Gastrocnemius medialis (tissue), 4 donors: ENCODE measurements at regions of chr14 and their contacts with region 1.

Region 1: DNA sequence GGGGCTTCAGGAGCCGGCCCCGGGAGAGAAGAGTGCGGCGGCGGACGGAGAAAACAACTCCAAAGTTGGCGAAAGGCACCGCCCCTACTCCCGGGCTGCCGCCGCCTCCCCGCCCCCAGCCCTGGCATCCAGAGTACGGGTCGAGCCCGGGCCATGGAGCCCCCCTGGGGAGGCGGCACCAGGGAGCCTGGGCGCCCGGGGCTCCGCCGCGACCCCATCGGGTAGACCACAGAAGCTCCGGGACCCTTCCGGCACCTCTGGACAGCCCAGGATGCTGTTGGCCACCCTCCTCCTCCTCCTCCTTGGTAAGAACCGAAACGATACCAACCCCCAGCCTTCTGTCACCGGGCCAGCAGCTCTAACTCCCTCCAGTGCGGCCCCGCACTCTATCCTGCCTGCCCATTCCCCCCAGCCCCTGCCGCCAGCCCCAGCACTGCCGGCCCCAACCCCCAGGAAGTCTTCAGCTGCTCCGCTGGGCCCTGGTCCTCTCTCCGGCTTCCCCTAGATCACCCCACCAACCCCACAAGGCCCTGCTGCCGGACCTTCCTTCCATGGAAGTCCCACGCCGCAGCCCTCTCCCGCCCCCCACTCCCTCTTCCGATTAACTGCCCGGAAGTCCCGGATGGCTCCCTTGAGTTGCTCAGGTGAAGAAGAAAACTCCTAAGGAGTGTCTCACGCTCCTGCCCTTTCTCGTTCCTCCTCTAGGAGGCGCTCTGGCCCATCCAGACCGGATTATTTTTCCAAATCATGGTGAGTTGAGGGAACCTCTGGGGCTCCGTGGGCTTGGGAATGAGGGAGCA is 693 bp downstream of the LRP10 start:
- DNase-seq: peak; percentile 62 to 79
- ATAC-seq: peak; percentile 72 to 74
- H3K4me3 ChIP-seq: peak overlapping the region; percentile 89 to 100 (median 96)
- H3K27ac ChIP-seq: peak overlapping the region; percentile 98 to 100 (median 99)
- H3K4me1 ChIP-seq: peaks cover 16 to 22% of the 10 kb centered on the region in 2 donors
- H3K27me3 ChIP-seq: no peaks in the 10 kb centered on the region
- CTCF ChIP-seq: peak; percentile 83 to 95 (median 91)
- POLR2A ChIP-seq: peak in 1 of 2 donors; percentile 34

Region 2: DNA sequence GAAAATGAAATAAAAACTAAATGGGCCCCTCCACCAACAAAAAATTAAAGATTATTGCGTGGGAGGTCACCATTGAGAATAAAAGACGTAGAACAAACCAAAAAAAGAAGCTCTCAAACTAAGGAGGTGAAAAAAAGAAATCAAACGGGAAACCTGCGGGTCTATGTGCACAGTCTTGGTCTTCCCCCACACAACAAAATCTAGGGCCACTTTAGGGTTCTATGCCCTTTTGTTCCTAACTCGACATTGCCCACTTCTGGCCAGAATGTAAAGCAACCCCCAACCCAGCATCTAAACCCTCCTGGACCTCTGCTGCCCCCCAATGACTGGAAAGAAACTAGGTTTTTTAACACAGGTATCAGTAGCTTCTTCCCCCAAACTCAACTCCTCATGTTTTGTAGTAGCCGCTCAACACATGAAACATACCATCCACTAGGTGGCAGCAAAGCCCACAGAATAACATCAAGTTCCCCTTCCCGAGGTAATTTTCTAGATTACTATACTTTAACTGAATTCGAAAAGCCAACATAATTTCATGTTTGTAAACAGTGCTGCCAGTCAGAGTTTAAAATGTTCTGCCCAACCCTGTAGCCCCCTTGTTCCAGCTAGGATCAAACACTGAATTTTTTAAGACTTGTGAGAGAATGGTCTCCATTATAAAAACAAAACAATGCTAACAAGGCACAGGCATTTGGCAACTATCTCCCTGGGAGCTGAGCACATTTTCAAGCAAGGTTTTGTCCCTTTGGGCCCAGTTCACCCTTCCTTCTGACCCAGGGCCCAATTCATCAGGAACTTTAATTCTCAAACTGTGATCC is 301.9 kb before region 1 on chr14:
- in situ Hi-C with region 1: loop called in 1 of 4 experiments (anchors 25 kb)
- intact Hi-C with region 1: no loop called
- DNase-seq: peak; percentile 35 to 56
- ATAC-seq: peak; percentile 58 to 82
- H3K4me3 ChIP-seq: no peak overlapping the region
- H3K27ac ChIP-seq: peak overlapping the region in 3 of 4 donors; percentile 0 to 39 (median 39)
- H3K4me1 ChIP-seq: peaks cover 21 to 28% of the 10 kb centered on the region in 2 donors
- H3K27me3 ChIP-seq: no peaks in the 10 kb centered on the region
- CTCF ChIP-seq: peak; percentile 75 to 90 (median 84)
- POLR2A ChIP-seq: no peak

Region 3: DNA sequence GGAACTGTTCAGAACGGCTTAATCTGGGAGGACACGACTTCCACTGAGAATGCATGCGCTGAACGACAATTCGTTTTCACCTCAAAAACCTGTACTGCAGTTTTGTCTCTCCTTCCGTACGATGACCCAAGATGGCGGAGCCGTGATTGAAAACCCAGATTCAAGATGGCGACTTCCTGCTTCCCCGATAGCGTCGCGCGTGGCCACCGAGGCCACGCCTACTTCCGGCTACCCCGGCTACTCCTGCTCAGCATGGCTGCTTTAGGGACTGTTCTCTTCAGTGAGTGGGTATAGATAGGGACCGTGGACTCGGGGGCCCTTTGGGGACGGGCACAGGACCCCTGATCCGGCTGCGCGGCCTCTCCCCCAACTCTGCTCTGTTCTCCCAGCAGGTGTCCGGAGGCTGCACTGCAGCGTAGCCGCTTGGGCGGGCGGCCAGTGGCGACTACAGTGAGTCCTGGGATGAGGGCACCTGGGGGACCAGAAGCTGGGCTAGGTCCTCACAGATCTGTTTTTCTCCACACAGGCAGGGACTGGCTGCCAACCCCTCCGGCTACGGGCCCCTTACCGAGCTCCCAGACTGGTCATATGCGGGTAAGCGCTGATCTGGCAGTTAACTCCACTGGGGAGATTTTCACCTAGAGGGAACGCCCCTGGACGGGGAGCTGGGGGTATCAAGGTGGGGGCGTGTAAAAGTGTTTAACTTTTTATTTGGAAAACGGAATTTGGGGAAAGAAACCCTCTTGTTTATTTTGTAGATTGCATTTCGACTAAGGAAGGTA is 42.4 kb before region 1 on chr14 and contains the start of gene MRPL52:
- in situ Hi-C with region 1: no loop called
- intact Hi-C with region 1: loop called (anchors 1 kb)
- DNase-seq: peak; percentile 82 to 86
- ATAC-seq: peak; percentile 100
- H3K4me3 ChIP-seq: peak within 1 kb of the TSS; percentile 74 to 97 (median 79)
- H3K27ac ChIP-seq: peak within 1 kb of the TSS; percentile 83 to 87 (median 86)
- H3K4me1 ChIP-seq: peaks cover 7 to 9% of the 10 kb centered on the region in 2 donors
- H3K27me3 ChIP-seq: no peaks in the 10 kb centered on the region
- CTCF ChIP-seq: no peak
- POLR2A ChIP-seq: peak in 1 of 2 donors; percentile 22
- total RNA-seq, gene MRPL52: 48.5 to 153 (median 89.0) TPM

Region 4: DNA sequence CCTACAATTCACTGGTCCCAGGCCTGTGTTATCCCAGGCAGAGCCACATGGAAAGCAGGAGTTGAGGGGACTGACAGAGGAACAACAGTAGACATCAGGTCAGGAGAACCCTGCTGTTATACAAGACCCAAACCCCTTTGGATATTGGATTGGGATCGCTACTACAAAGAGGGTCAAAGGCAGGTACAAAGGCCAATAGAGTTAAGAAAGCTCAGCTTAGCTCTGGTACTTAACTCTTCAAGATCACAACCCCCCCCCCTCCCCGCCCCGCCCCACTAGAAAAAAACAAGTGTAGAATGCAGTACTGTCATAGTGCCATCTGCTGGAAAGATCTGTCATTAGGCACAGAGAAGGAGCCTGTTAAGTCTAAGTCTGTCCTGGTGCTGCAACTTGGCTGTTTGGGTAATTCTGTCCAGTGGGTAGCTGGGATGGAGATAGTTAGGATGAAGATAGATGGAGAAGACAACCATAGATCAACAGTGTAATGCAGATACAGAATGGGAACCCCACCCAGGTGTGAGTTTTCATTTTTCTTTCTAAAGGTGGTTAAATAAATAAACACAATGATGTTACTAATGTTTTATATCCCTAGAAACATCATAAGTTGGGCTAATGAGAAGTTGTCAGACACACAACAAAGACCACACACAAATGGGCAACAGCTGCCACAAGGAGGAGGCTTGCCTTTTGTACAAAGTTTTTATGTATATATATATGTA is 28.0 kb after region 1 on chr14:
- in situ Hi-C with region 1: no loop called
- intact Hi-C with region 1: loop called (anchors 1 kb)
- DNase-seq: no peak
- ATAC-seq: peak; percentile 62 to 71
- H3K4me3 ChIP-seq: no peak overlapping the region
- H3K27ac ChIP-seq: peak overlapping the region in 1 of 4 donors; percentile 22
- H3K4me1 ChIP-seq: no peaks in the 10 kb centered on the region
- H3K27me3 ChIP-seq: no peaks in the 10 kb centered on the region
- CTCF ChIP-seq: peak in 4 of 5 experiments; percentile 21 to 56 (median 43)
- POLR2A ChIP-seq: no peak

Region 5: GRCh38 chr14:22929104-22929847 is 57.0 kb after region 1 on chr14 and contains the start of gene PRMT5:
- in situ Hi-C with region 1: no loop called
- intact Hi-C with region 1: loop called (anchors 1 kb)
- DNase-seq: peak; percentile 100
- ATAC-seq: peak; percentile 98 to 99
- H3K4me3 ChIP-seq: peak within 1 kb of the TSS; percentile 78 to 95 (median 86)
- H3K27ac ChIP-seq: peak within 1 kb of the TSS; percentile 89 to 96 (median 94)
- H3K4me1 ChIP-seq: peaks cover 9 to 11% of the 10 kb centered on the region in 2 donors
- H3K27me3 ChIP-seq: no peaks in the 10 kb centered on the region
- CTCF ChIP-seq: no peak
- POLR2A ChIP-seq: peak; percentile 84 to 92
- total RNA-seq, gene PRMT5: 67.2 to 83.2 (median 78.6) TPM

Region 6: DNA sequence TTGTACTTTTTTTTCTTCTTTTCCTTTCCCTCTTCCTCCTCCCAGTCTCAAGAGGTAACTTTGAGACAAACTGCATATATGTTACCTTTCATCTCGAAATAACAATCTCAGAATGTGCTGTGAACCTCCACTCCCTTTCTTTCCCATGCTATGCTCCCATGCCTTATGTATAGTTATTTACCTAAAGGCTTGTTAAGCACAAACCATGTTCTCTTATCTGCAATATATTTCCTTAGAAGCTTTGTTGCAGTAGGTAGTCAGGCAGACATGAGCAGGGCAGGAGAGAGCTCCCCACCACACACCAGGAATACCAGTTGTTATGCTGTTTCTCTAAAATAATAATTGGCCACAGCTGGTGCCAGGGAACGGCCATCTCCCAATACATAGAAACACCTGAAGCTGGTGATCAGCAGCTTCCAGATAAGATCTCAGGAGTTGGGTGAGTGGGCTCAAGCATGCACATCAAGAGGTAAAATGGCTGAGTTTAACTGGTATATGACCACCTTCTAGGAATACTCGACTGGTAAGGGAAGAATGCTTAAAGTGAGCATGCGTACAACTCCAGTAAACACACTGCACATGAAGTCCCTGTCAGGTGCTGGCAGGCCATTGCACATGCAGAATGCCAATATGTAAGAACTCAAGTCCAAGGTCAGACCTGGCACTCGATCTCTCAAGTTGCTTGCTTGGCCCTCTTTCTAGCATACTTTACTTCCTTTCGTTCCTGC is 749.1 kb after region 1 on chr14:
- in situ Hi-C with region 1: no loop called
- intact Hi-C with region 1: no loop called
- DNase-seq: no peak
- ATAC-seq: no peak
- H3K4me3 ChIP-seq: no peak overlapping the region
- H3K27ac ChIP-seq: no peak overlapping the region
- H3K4me1 ChIP-seq: no peaks in the 10 kb centered on the region
- H3K27me3 ChIP-seq: no peaks in the 10 kb centered on the region
- CTCF ChIP-seq: no peak
- POLR2A ChIP-seq: no peak